Activated CD4-positive, alpha-beta memory T cell treated with anti-CD3 and anti-CD28 coated beads, Interleukin-2, amount 10 ng/mL, durations not matched to agents 7 days and 5 days (primary cell): ENCODE measurements at regions of chr10 and their contacts with region 1.

Region 1: GRCh38 chr10:73940634-73941221 is 29.8 kb downstream of the PLAU start:
- DNase-seq: peak; percentile 88
- H3K4me3 Mint-ChIP-seq: peak overlapping the region; percentile 31
- H3K27ac Mint-ChIP-seq: no peak overlapping the region
- H3K4me1 Mint-ChIP-seq: peaks cover 26% of the 10 kb centered on the region
- H3K27me3 Mint-ChIP-seq: peaks cover 7% of the 10 kb centered on the region

Region 2: DNA sequence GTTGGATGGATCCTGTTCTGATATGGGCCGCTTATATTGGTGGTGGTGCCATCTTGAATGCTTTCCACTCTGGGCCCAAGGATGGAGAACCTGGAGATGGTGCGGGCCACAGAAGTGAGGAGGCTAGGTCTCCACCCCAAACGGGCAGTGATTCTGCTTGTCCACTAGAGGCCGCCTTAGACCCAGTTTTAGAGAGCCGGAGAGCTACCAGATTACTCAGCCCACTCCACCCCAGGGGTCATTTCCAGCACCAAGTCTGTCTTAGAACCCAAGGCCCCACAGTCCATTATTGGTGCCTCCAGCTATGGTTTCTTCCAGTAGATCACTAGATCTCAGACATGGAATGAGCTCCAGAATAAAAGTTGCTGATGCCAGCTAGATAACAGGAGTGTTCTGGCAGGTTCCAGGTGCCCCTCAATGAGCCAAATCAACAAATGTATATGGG is 54.6 kb before region 1 on chr10:
- CTCF ChIA-PET with region 1: interaction called, 415 read pairs
- POLR2A ChIA-PET with region 1: interaction called, 26 read pairs
- DNase-seq: peak; percentile 74
- H3K4me3 Mint-ChIP-seq: no peak overlapping the region
- H3K27ac Mint-ChIP-seq: no peak overlapping the region
- H3K4me1 Mint-ChIP-seq: peaks cover 16% of the 10 kb centered on the region
- H3K27me3 Mint-ChIP-seq: no peaks in the 10 kb centered on the region

Region 3: GRCh38 chr10:73920089-73920488 is 20.6 kb before region 1 on chr10:
- CTCF ChIA-PET with region 1: interaction called, 17 read pairs
- POLR2A ChIA-PET with region 1: no interaction called
- DNase-seq: no peak
- H3K4me3 Mint-ChIP-seq: no peak overlapping the region
- H3K27ac Mint-ChIP-seq: no peak overlapping the region
- H3K4me1 Mint-ChIP-seq: peaks cover 37% of the 10 kb centered on the region
- H3K27me3 Mint-ChIP-seq: peaks cover 16% of the 10 kb centered on the region

Region 4: DNA sequence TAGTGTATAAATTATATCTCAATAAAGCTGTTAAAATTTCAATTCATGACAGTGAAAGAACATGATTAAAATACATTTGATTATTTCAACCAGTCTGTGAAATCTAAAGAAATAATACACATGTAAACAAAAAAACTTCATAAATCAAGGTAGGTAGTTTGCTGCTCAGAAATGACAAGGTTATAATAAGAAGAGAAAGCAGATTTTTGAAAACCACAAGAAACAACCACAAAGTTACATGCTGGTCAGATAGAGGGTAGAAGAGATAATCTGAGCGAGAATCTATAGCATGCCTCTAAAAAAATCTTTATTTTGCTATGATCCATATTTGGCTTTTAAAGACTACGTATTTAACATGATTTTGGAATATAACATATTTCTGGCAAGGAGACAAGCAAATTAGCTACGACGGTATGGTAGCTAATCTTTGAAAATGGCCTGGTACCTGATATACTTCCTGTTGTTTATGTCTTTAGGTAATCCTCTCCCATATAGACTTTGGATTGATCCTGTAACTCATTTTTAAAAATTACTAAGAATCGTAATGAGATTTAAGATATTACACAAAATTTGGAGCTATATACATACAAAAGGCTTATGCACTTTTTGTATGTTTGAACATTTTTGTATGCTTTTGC is 33.7 kb after region 1 on chr10:
- CTCF ChIA-PET with region 1: interaction called, 12 read pairs
- POLR2A ChIA-PET with region 1: no interaction called
- DNase-seq: no peak
- H3K4me3 Mint-ChIP-seq: peak overlapping the region; percentile 30
- H3K27ac Mint-ChIP-seq: peak overlapping the region; percentile 54
- H3K4me1 Mint-ChIP-seq: peaks cover 25% of the 10 kb centered on the region
- H3K27me3 Mint-ChIP-seq: peaks cover 7% of the 10 kb centered on the region

Region 5: GRCh38 chr10:73997787-73998622 is 57.3 kb after region 1 on chr10 and contains the start of gene VCL:
- CTCF ChIA-PET with region 1: interaction called, 12 read pairs
- POLR2A ChIA-PET with region 1: interaction called, 3 read pairs
- DNase-seq: peak; percentile 95
- H3K4me3 Mint-ChIP-seq: peak within 1 kb of the TSS; percentile 96
- H3K27ac Mint-ChIP-seq: peak within 1 kb of the TSS; percentile 97
- H3K4me1 Mint-ChIP-seq: peaks cover 67% of the 10 kb centered on the region
- H3K27me3 Mint-ChIP-seq: no peaks in the 10 kb centered on the region
- total RNA-seq, gene VCL: 70.1 to 71.8 TPM